Left cardiac atrium (tissue), 4 donors: ENCODE measurements at regions of chr5 and their contacts with region 1.

Region 1: GRCh38 chr5:141475625-141476131 is at the start of gene PCDHGC3:
- DNase-seq: peak; percentile 94
- ATAC-seq: peak; percentile 99
- total RNA-seq, gene PCDHGC3: 33.7 to 39.1 TPM

Region 2: DNA sequence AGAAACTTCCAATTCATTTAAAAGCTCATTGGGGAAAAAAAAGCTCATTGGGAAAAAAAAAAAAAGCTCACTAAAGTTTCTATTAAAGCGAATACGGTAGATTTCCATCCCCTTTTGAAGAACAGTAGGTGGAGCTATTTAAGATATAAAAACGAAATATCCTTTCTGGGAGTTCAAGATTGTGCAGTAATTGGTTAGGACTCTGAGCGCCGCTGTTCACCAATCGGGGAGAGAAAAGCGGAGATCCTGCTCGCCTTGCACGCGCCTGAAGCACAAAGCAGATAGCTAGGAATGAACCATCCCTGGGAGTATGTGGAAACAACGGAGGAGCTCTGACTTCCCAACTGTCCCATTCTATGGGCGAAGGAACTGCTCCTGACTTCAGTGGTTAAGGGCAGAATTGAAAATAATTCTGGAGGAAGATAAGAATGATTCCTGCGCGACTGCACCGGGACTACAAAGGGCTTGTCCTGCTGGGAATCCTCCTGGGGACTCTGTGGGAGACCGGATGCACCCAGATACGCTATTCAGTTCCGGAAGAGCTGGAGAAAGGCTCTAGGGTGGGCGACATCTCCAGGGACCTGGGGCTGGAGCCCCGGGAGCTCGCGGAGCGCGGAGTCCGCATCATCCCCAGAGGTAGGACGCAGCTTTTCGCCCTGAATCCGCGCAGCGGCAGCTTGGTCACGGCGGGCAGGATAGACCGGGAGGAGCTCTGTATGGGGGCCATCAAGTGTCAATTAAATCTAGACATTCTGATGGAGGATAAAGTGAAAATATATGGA is 45.2 kb before region 1 on chr5 and contains the start of gene PCDHGA12:
- intact Hi-C with region 1: loop called in 1 of 2 experiments (anchors 2 kb)
- DNase-seq: peak; percentile 63
- ATAC-seq: peak; percentile 86 to 94
- total RNA-seq, gene PCDHGA12: 4.5 to 6.5 TPM

Region 3: DNA sequence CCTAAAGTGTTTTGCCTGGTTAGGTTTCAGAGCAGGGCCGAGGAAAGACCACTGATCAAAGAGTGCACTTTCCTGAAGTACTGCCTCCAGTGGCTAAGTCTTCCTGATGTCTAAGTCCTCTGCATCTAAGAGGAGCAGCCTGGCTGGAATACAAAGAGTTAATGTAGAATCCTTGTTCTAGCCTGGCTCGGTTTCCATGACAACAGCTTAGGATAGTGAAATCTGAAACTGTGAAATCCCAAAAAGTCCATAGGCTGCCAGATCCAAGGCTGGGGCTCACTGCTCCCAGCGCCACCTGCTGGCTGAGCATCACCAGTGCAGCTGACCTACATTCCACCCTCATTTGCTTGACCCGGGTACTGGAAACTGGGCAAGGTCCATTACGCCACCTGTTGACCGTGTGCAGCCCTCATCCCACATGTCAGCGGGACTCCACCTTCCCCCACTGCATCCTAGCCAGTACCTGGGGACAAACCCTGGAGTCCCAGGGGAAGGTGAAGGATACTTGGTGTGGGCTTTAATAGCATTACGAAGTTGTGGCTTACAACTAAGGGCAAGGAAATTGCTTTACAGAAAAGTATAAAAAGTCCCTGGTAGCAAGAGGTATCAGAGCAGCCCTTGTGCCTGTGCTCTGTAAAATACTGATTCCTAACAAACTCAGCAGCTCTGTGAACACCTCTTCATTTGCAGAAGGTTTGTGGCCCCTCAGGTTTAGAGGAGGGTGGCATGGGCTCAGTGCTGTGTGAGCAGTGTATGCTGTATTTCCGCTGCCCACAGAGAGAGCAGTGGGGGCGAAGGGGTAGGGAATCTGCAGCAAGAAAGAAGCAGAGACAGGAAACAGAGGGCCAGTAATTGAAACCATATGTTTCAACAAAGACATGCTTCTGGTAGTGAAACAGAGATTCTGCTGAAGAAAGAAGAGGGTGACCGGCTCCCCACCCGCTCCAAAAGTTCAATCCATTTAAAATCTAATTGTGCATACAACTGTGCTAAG is 49.2 kb after region 1 on chr5:
- intact Hi-C with region 1: loop called in 1 of 2 experiments (anchors 5 kb)
- DNase-seq: peak; percentile 85
- ATAC-seq: peak; percentile 61 to 85